Body of pancreas (tissue), 4 donors: ENCODE measurements at regions of chr20 and their contacts with region 1.

Region 1: DNA sequence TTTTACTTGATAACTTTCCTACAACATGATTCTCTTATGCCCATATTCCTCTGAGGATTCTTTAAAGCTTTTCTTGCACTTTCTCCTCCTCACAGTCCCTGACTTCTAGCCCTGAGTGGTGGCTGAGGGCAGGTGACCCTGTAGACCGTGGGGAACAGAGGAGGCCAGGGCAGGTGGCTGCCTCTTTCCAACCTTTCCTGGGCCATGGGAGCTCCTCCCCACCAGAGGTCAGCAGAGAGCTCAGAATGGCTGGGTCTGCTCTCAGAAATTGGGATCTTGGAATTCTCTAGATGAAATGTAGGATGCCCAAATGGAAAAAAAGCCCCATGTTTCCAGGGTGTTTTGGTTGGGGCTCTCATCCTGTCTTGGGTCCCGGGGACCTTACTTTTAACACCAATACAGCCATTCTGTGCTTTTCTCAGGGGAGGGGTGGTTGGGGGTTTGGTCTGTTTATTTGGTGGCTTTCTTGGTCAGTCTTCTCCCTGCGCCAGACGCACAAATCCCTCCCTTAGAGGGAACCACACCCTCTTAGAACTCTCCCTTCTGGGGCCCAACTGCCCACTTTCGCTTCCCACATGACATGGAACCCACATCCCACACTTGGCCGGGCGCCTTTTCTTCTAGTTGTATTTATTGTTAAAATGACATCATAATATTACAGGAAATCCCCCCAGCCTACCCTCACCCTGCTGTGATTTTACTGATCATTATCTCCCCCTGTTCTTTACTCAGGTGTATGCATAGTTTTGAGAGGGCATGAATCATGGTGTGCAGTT is 17.9 kb downstream of the GNAS start:
- DNase-seq: peak; percentile 79 to 85 (median 84)
- ATAC-seq: peak; percentile 93
- H3K4me3 ChIP-seq: no peak overlapping the region
- H3K27ac ChIP-seq: no peak overlapping the region
- H3K4me1 ChIP-seq: no peaks in the 10 kb centered on the region
- H3K27me3 ChIP-seq: no peaks in the 10 kb centered on the region
- CTCF ChIP-seq: peak; percentile 75 to 91 (median 85)
- POLR2A ChIP-seq: no peak

Region 2: DNA sequence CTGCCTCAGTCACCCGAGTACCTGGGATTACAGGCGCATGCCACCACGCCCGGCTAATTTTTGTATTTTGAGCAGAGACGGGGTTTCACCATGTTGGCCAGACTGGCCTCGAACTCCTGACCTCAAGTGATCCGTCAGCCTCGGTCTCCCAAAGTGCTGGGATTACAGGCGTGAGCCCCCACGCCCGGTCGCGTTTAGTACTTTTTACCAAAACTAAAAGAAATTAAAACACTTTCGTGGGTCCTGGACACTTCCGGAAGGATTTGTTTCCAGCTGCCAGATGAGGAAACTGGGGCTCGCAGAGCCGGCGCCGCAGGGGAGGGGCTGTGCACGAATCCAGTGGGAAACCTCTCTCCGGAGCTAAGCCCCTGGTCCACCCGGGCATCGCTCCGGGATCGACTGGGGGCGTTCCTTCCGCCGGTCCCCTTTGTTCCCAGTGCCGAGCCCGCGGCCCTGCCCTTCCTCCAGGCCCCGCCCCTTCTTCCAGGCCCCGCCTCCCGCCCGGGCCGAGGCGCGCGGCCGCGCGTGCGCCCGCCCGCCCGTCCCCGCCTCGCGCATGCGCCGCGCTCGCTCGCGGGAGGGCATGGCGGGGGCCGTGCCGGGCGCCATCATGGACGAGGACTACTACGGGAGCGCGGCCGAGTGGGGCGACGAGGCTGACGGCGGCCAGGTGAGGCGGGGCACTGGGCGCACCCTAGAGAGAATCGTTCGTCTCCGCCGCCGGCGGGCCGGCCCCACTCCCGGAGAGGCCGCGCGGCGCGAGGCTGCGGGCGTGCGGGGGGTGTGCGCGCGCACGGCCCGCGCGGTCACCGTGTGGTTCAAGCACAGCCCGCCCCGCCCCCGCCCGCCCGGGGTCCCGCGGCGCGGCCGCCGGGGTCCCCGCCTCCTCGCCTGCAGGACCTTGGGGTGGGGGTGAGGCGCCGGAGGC is 110.5 kb after region 1 on chr20 and contains the start of gene NELFCD:
- intact Hi-C with region 1: no loop called
- DNase-seq: peak; percentile 86 to 92 (median 90)
- ATAC-seq: peak; percentile 96
- H3K4me3 ChIP-seq: peak within 1 kb of the TSS; percentile 22 to 33
- H3K27ac ChIP-seq: peak within 1 kb of the TSS; percentile 37 to 79 (median 69)
- H3K4me1 ChIP-seq: peaks cover 24% of the 10 kb centered on the region
- H3K27me3 ChIP-seq: no peaks in the 10 kb centered on the region
- CTCF ChIP-seq: no peak
- POLR2A ChIP-seq: peak; percentile 37 to 79 (median 71)
- total RNA-seq, gene NELFCD: 35.9 to 45.9 TPM

Region 3: DNA sequence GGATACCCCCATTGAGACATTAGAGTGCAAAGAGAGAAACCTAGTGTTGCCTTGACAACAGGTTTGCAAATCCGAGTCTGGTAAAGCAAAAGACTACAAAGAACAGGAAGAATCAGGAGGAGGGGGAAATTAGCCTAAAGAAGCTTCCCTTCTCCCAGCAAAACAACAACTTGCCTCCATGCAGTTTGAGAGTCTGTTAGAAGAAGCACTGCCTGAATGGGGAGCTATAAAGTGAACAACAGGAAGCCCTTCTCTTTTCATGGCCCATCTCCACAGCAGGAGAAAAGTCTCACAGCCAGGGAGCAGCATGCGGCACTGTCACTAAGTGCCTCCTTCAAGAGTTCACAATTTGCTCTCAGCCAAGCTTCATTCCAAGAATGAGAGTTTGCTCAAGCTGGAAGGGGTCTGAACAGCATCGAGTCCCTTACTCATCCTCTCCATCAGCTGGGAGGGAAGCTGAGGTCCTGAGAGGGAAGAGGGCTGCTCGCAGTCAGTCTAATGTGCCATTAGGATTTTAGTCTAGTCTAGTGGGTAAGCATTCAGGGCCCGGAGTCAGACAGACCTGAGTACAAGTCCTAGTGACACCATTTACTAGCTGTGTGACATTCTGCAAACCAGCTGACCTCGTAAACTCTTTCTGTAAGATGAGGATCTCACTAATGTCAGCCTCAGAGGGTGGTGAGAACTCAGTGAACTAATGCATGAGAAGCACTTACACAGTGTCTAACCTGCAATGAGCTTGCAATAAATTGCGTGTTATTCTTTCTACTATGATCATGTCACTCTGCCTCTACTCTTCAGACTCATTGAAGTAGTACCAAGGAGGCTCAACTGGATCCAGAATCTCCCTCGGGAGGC is 251.9 kb after region 1 on chr20:
- intact Hi-C with region 1: no loop called
- DNase-seq: no peak
- ATAC-seq: no peak
- H3K4me3 ChIP-seq: no peak overlapping the region
- H3K27ac ChIP-seq: no peak overlapping the region
- H3K4me1 ChIP-seq: peaks cover 10% of the 10 kb centered on the region
- H3K27me3 ChIP-seq: no peaks in the 10 kb centered on the region
- CTCF ChIP-seq: no peak
- POLR2A ChIP-seq: no peak

Region 4: GRCh38 chr20:59217794-59218280 is 347.4 kb after region 1 on chr20:
- intact Hi-C with region 1: loop called (anchors 5 kb)
- DNase-seq: peak in 1 of 4 donors; percentile 19
- ATAC-seq: no peak
- H3K4me3 ChIP-seq: no peak overlapping the region
- H3K27ac ChIP-seq: no peak overlapping the region
- H3K4me1 ChIP-seq: peaks cover 13% of the 10 kb centered on the region
- H3K27me3 ChIP-seq: no peaks in the 10 kb centered on the region
- CTCF ChIP-seq: no peak
- POLR2A ChIP-seq: no peak

Region 5: DNA sequence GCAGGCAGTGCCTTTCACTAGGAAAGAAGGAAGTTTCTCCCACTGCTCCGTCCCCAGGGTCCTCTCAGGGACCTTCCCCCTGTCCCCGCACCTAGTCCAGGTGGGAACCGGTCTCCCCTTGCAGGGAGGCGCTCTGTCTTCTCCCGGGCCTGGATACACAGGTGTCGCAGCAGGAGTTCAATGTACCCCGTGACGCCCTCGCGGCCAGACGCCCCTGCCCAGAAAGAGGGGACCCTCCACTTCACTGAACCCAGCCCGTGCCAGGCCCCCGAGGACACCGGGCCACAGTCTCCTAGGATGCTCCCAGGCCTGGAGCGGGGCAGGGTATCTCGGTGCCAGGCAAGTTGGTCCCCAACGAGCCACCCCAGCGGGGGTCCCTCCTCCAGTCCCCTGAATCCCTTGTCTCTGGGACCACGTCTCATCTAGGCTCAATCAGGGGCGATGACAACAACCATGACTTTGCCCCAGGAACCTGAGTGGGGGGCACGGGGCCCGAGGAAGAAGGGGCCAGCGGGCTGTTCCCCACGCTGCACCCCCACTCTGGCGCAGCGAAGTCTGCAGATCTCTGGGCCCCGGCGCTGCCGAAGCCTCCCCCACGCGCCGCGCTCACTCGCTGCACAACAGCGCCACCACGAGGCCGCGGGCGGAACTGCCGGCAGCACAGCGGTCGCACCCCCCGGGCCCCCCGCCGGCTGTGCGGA is 533.0 kb after region 1 on chr20:
- intact Hi-C with region 1: loop called (anchors 10 kb)
- DNase-seq: peak; percentile 52 to 70 (median 57)
- ATAC-seq: peak; percentile 69
- H3K4me3 ChIP-seq: no peak overlapping the region
- H3K27ac ChIP-seq: peak overlapping the region in 2 of 4 donors; percentile 2 to 20
- H3K4me1 ChIP-seq: peaks cover 18% of the 10 kb centered on the region
- H3K27me3 ChIP-seq: peaks cover 0 to 4% of the 10 kb centered on the region in 2 donors
- CTCF ChIP-seq: peak; percentile 86 to 99 (median 95)
- POLR2A ChIP-seq: no peak

Region 6: DNA sequence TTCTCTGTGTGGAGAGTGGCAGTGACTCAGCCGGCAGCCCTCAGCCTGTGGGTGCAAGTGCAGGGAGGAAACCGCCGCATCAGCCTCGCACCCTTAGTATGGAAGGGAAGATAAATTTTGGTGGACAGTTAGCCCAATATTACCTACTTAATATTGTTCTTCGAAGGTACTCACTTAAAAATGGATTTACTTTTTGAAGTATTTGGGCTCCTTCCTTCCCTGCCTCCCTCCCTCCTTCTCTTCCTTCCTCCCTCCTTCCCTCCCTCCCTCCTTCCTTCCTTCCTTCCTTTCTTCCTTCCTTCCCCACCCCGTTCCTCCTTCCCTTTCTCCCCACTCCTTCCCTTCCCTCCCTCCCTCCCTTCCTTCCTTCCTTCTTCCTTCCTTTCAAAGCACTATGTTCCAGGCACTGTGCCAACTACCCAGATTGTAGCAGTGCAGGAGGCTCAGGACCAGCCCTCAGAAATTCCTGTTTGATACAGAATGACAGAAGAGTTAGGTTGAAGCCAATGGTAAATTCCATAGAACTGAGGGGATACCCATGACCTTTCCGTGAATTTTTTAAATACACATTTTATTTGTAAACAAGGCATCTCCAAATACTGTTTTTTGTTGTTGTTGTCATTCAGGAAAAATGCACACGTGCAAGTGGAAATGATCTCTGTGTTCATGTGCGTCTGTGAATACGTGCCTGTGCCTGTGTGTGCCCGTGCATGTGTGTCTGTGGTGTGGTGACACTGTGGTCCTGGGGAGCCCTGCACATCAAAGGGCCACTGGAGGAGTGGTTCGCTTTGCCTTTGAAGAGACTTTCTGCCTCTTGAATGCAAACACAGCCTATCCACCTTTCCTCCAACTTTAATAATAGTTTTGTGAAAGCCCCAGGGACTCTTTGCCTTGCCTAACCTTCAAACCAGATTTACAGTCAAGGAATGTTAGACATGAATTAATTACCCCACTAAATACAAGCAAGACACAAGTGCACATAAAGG is 571.7 kb after region 1 on chr20:
- intact Hi-C with region 1: loop called (anchors 10 kb)
- DNase-seq: peak in 1 of 4 donors; percentile 16
- ATAC-seq: no peak
- H3K4me3 ChIP-seq: no peak overlapping the region
- H3K27ac ChIP-seq: no peak overlapping the region
- H3K4me1 ChIP-seq: no peaks in the 10 kb centered on the region
- H3K27me3 ChIP-seq: no peaks in the 10 kb centered on the region
- CTCF ChIP-seq: no peak
- POLR2A ChIP-seq: no peak